Caco-2 (cell line): ENCODE measurements at regions of chr3 and their contacts with region 1.

Region 1: DNA sequence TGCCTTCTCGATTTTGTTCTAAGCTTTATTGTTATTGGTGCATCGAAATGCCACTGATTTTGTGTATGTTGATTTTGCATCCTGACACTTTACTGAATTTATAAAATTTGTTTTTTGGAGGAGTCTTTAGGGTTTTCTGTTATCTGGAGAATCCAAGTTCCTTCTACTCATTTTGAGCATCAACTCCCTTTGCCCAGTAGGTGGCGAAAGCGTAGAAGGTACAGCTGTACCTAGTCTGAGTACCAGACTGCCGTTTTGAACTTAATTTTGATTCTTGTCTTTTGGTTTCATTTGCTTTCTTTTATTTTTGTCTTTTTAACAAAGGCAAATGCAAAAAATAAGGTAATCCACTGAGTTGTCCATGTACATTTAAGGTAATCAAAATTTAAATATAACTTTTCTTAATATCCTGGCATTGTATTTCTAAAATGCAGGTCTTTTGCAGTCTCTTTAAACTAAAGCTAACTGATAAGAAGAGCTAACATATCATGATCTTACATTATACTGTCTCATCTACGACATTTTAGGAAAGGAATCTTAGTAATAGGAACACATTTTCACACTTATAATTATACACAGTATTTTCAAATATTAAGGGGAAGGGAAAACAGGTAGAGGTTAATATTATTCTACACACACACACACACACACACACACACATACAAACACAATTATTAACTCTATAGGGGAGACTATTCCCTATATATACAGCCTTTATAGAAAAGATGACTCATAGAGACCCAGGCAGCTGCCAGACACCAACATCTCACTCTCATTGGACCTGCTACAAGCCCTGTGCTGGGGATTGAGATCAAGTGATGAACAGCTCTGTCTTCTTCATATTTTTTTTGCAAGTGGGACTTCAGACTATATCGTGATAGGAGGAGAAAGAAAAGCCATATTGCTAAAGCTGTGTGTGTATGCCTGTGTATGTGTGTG is 71.7 kb downstream of the SYNPR start:
- DNase-seq: peak; percentile 43 to 56
- H3K4me3 ChIP-seq: no peak overlapping the region
- H3K4me3 Mint-ChIP-seq: no peak overlapping the region
- H3K27ac Mint-ChIP-seq: no peak overlapping the region
- H3K4me1 ChIP-seq: no peaks in the 10 kb centered on the region
- H3K4me1 Mint-ChIP-seq: peaks cover 5% of the 10 kb centered on the region
- H3K27me3 ChIP-seq: no peaks in the 10 kb centered on the region; the same call in 1 of the 2 replicates
- H3K27me3 Mint-ChIP-seq: peaks cover 12% of the 10 kb centered on the region
- CTCF ChIP-seq: peak; percentile 72 to 89

Region 2: GRCh38 chr3:62622553-62623193 is 727.2 kb before region 1 on chr3:
- CTCF ChIA-PET with region 1: no interaction called
- POLR2A ChIA-PET with region 1: no interaction called
- intact Hi-C with region 1: loop called (anchors 10 kb)
- DNase-seq: peak in 1 of 2 experiments; percentile 44
- H3K4me3 ChIP-seq: no peak overlapping the region
- H3K4me3 Mint-ChIP-seq: no peak overlapping the region
- H3K27ac Mint-ChIP-seq: no peak overlapping the region
- H3K4me1 ChIP-seq: no peaks in the 10 kb centered on the region
- H3K4me1 Mint-ChIP-seq: no peaks in the 10 kb centered on the region
- H3K27me3 ChIP-seq: no peaks in the 10 kb centered on the region
- H3K27me3 Mint-ChIP-seq: peaks cover 14% of the 10 kb centered on the region
- CTCF ChIP-seq: peak; percentile 52 to 59

Region 3: GRCh38 chr3:63565220-63565619 is 215.4 kb after region 1 on chr3:
- CTCF ChIA-PET with region 1: interaction called, 3 read pairs
- POLR2A ChIA-PET with region 1: no interaction called
- intact Hi-C with region 1: loop called (anchors 1 kb)
- DNase-seq: no peak
- H3K4me3 ChIP-seq: no peak overlapping the region
- H3K4me3 Mint-ChIP-seq: no peak overlapping the region
- H3K27ac Mint-ChIP-seq: no peak overlapping the region
- H3K4me1 ChIP-seq: 0 out of 2 replicates have a peak, but pooled peaks cover under 1% of the 10 kb centered on the region
- H3K4me1 Mint-ChIP-seq: no peaks in the 10 kb centered on the region
- H3K27me3 ChIP-seq: no peaks in the 10 kb centered on the region
- H3K27me3 Mint-ChIP-seq: no peaks in the 10 kb centered on the region
- CTCF ChIP-seq: no peak

Region 4: DNA sequence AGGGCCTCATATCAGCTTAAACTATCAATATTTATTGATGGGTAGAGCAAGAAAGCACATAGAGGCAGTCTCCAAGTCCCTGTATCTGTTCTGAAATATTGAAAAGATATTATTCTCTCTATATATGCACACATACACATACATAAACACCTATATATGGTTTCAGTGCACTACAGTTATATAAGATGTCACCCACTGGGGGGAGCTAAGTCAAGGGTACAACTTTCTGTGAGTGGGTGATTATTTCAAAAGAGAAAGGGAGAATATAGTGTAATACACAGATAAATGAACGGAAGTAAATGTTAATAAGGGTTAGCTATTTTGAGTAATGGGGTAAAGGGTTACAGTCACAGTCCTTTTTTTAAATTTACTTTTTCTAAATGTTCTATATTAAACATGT is 311.4 kb after region 1 on chr3:
- CTCF ChIA-PET with region 1: interaction called, 49 read pairs
- POLR2A ChIA-PET with region 1: no interaction called
- intact Hi-C with region 1: loop called (anchors 1 kb)
- DNase-seq: no peak
- H3K4me3 ChIP-seq: no peak overlapping the region
- H3K4me3 Mint-ChIP-seq: no peak overlapping the region
- H3K27ac Mint-ChIP-seq: no peak overlapping the region
- H3K4me1 ChIP-seq: no peaks in the 10 kb centered on the region
- H3K4me1 Mint-ChIP-seq: no peaks in the 10 kb centered on the region
- H3K27me3 ChIP-seq: no peaks in the 10 kb centered on the region
- H3K27me3 Mint-ChIP-seq: peaks cover 5% of the 10 kb centered on the region
- CTCF ChIP-seq: peak in 1 of 2 experiments; percentile 17

Region 5: GRCh38 chr3:63818281-63819150 is 468.7 kb after region 1 on chr3:
- CTCF ChIA-PET with region 1: interaction called, 13 read pairs
- POLR2A ChIA-PET with region 1: no interaction called
- intact Hi-C with region 1: loop called (anchors 1 kb)
- DNase-seq: peak; percentile 40 to 63
- H3K4me3 ChIP-seq: no peak overlapping the region
- H3K4me3 Mint-ChIP-seq: no peak overlapping the region
- H3K27ac Mint-ChIP-seq: no peak overlapping the region
- H3K4me1 ChIP-seq: no peaks in the 10 kb centered on the region
- H3K4me1 Mint-ChIP-seq: no peaks in the 10 kb centered on the region
- H3K27me3 ChIP-seq: no peaks in the 10 kb centered on the region
- H3K27me3 Mint-ChIP-seq: no peaks in the 10 kb centered on the region
- CTCF ChIP-seq: peak; percentile 76 to 83

Region 6: GRCh38 chr3:63993653-63994079 is 643.8 kb after region 1 on chr3:
- CTCF ChIA-PET with region 1: no interaction called
- POLR2A ChIA-PET with region 1: no interaction called
- intact Hi-C with region 1: loop called (anchors 5 kb)
- DNase-seq: peak; percentile 63 to 68
- H3K4me3 ChIP-seq: no peak overlapping the region
- H3K4me3 Mint-ChIP-seq: no peak overlapping the region
- H3K27ac Mint-ChIP-seq: no peak overlapping the region
- H3K4me1 ChIP-seq: no peaks in the 10 kb centered on the region
- H3K4me1 Mint-ChIP-seq: no peaks in the 10 kb centered on the region
- H3K27me3 ChIP-seq: no peaks in the 10 kb centered on the region
- H3K27me3 Mint-ChIP-seq: no peaks in the 10 kb centered on the region
- CTCF ChIP-seq: peak; percentile 76 to 93